ENCODE measurements at regions of chr1 and their contacts with region 1.

Region 1: GRCh38 chr1:239262538-239262937 is 123.8 kb upstream of the CHRM3 start:
- DNase-seq: no peak
- H3K4me3 ChIP-seq: no peak overlapping the region
- H3K27ac ChIP-seq: no peak overlapping the region
- H3K4me1 ChIP-seq: no peaks in the 10 kb centered on the region
- H3K27me3 ChIP-seq: no peaks in the 10 kb centered on the region
- CTCF ChIP-seq: no peak
- POLR2A ChIP-seq: no peak

Region 2: GRCh38 chr1:239228451-239228850 is 34.1 kb before region 1 on chr1:
- intact Hi-C with region 1: no loop called
- DNase-seq: no peak
- H3K4me3 ChIP-seq: no peak overlapping the region
- H3K27ac ChIP-seq: no peak overlapping the region
- H3K4me1 ChIP-seq: no peaks in the 10 kb centered on the region
- H3K27me3 ChIP-seq: no peaks in the 10 kb centered on the region
- CTCF ChIP-seq: no peak
- POLR2A ChIP-seq: no peak

Region 3: DNA sequence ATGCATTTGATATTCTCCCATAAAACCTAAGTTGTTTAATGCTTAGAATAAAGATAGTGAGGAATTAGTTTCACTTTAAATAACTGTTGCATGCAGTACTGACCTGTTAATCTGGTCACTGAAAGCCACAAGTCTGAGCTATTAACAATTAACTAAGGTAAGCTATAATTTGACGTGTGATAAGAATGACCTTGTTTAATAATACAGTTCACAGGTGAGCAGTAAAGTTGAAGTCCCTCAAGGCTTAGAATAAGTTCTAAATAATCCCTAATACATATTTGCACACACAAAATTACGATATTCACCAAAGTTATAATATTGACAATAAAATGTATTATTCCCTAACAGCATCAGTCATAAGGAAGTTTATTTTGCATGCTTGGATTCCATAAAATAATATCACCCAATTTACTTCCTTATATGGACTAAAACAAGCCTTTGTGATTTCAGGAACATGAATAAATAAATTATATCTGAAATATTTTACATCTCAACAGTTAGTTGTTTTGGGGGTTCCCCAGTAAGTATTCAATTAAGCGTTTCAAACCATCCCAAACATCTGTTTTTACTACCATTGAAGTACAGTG is 53.2 kb after region 1 on chr1:
- intact Hi-C with region 1: no loop called
- DNase-seq: no peak
- H3K4me3 ChIP-seq: no peak overlapping the region
- H3K27ac ChIP-seq: no peak overlapping the region
- H3K4me1 ChIP-seq: no peaks in the 10 kb centered on the region
- H3K27me3 ChIP-seq: no peaks in the 10 kb centered on the region
- CTCF ChIP-seq: no peak
- POLR2A ChIP-seq: no peak

Region 4: DNA sequence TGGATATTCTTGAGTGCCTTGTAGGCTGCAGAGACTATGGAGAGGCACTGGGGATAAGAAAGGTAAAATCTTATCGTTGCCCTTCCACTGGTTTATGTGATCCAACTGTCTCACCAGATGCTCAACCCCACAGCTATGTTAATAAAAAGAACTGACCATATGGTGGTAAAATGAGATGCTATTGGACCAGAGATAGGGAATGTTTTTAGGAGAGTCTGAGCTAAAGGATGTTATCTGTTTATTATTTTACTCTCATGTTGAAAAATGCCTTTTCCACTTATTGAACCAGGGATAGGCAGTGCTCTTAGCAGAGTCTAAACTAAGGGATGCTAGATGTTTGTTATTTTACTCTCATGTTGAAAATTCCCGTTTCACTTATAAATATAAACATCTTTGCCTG is 1522.2 kb after region 1 on chr1:
- intact Hi-C with region 1: loop called (anchors 5 kb)
- DNase-seq: no peak
- H3K4me3 ChIP-seq: no peak overlapping the region
- H3K27ac ChIP-seq: no peak overlapping the region
- H3K4me1 ChIP-seq: no peaks in the 10 kb centered on the region
- H3K27me3 ChIP-seq: no peaks in the 10 kb centered on the region
- CTCF ChIP-seq: no peak
- POLR2A ChIP-seq: no peak